Activated B cell treated with CpG ODN at 0.5 μM for 24 hours (primary cell): ENCODE measurements at regions of chr16 and their contacts with region 1.

Region 1: GRCh38 chr16:67641779-67642708 is 2.9 kb upstream of the CARMIL2 start:
- DNase-seq: no peak
- ATAC-seq: no peak
- H3K4me3 Mint-ChIP-seq: no peak overlapping the region
- H3K27ac Mint-ChIP-seq: no peak overlapping the region
- H3K4me1 Mint-ChIP-seq: peaks cover 17% of the 10 kb centered on the region
- H3K27me3 Mint-ChIP-seq: no peaks in the 10 kb centered on the region
- CTCF ChIP-seq: no peak

Region 2: GRCh38 chr16:67499106-67499505 is 142.9 kb before region 1 on chr16:
- CTCF ChIA-PET with region 1: interaction called, 8 read pairs
- POLR2A ChIA-PET with region 1: interaction called, 5 read pairs
- intact Hi-C with region 1: loop called (anchors 1 kb)
- DNase-seq: no peak
- ATAC-seq: no peak
- H3K4me3 Mint-ChIP-seq: no peak overlapping the region
- H3K27ac Mint-ChIP-seq: no peak overlapping the region
- H3K4me1 Mint-ChIP-seq: peaks cover 28% of the 10 kb centered on the region
- H3K27me3 Mint-ChIP-seq: no peaks in the 10 kb centered on the region
- CTCF ChIP-seq: no peak

Region 3: GRCh38 chr16:67530013-67530939 is 111.8 kb before region 1 on chr16:
- CTCF ChIA-PET with region 1: interaction called, 9 read pairs
- POLR2A ChIA-PET with region 1: interaction called, 12 read pairs
- intact Hi-C with region 1: no loop called
- DNase-seq: peak; percentile 81
- ATAC-seq: peak; percentile 65
- H3K4me3 Mint-ChIP-seq: peak overlapping the region; percentile 90
- H3K27ac Mint-ChIP-seq: peak overlapping the region; percentile 95
- H3K4me1 Mint-ChIP-seq: peaks cover 61% of the 10 kb centered on the region
- H3K27me3 Mint-ChIP-seq: no peaks in the 10 kb centered on the region
- CTCF ChIP-seq: no peak

Region 4: GRCh38 chr16:67546761-67547422 is 95.2 kb before region 1 on chr16:
- CTCF ChIA-PET with region 1: interaction called, 113 read pairs
- POLR2A ChIA-PET with region 1: interaction called, 58 read pairs
- intact Hi-C with region 1: loop called (anchors 1 kb)
- DNase-seq: peak; percentile 73
- ATAC-seq: no peak
- H3K4me3 Mint-ChIP-seq: peak overlapping the region; percentile 58
- H3K27ac Mint-ChIP-seq: peak overlapping the region; percentile 95
- H3K4me1 Mint-ChIP-seq: peaks cover 87% of the 10 kb centered on the region
- H3K27me3 Mint-ChIP-seq: no peaks in the 10 kb centered on the region
- CTCF ChIP-seq: peak; percentile 95

Region 5: DNA sequence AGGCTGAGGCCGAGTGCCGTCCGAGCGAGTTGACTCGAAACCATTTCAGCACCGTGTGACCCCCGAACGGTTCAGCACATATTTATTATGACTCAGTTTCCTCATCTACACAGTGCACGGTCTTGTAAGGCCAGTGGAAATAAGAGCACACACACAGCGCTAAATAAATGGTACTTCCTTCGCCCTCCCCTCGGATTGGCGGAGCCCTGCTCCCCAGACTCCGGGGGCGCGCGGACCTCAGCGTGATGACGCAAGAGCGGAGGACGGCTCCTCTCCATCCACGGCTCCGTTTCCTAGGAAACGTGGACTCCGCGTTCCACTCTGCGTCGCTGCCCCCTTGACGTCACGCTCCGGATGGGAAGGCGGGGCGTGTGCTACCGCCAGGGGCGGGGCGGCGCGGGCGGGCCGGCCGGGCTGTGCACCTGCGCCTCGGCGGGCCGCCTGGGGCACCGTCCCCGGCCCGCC is 18.6 kb after region 1 on chr16 and contains the start of gene PARD6A:
- CTCF ChIA-PET with region 1: interaction called, 8 read pairs
- POLR2A ChIA-PET with region 1: interaction called, 32 read pairs
- intact Hi-C with region 1: loop called (anchors 1 kb)
- DNase-seq: peak; percentile 87
- ATAC-seq: peak; percentile 80
- H3K4me3 Mint-ChIP-seq: peak within 1 kb of the TSS; percentile 94
- H3K27ac Mint-ChIP-seq: peak within 1 kb of the TSS; percentile 94
- H3K4me1 Mint-ChIP-seq: peaks cover 28% of the 10 kb centered on the region
- H3K27me3 Mint-ChIP-seq: no peaks in the 10 kb centered on the region
- CTCF ChIP-seq: no peak
- total RNA-seq, gene PARD6A: 5.9 and 6.0 TPM in 2 replicates

Region 6: DNA sequence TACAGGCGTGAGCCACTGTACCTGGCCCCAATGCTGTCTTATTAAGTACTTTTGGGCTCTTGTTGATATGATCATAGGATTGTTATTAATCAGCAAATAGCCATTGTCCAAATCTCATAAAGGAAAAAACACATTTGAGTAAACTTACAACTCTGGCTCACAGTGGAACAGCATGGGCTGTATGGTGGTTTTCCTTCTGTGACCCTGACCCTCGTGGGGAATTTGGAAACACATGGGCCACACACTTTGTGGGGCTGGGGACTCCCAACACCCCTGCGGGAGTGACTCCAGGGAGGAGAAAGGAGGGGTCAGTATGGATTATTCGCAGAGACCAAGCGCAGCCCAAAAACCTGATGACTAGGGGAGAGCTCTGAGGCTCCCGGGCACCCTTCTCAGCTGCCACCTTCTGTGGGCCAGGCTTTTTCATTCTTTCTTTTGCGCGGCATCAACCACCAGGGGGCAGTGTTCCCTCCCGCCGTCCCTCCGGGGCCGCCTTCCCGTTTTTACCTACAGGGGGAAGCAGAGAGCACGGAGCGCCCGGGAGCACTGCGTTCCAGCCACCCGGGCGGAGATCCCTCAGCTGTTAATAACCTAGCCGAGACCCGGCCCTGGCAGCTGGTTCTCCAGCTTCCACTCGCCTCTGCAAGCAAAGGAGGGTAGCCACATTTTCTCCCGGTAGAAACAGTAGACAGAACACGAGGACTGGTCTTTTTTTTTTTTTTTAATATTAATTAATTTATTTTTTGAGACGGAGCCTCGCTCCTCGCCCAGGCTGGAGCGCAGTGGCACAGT is 174.4 kb after region 1 on chr16:
- CTCF ChIA-PET with region 1: no interaction called
- POLR2A ChIA-PET with region 1: no interaction called
- intact Hi-C with region 1: no loop called
- DNase-seq: peak; percentile 92
- ATAC-seq: peak; percentile 98
- H3K4me3 Mint-ChIP-seq: peak overlapping the region; percentile 65
- H3K27ac Mint-ChIP-seq: peak overlapping the region; percentile 24
- H3K4me1 Mint-ChIP-seq: peaks cover 6% of the 10 kb centered on the region
- H3K27me3 Mint-ChIP-seq: no peaks in the 10 kb centered on the region
- CTCF ChIP-seq: peak; percentile 94